ENCODE measurements at regions of chrX and their contacts with region 1.

Region 1: GRCh38 chrX:133792198-133792953 is 193.0 kb downstream of the GPC3 start:
- DNase-seq: peak; percentile 78
- H3K4me3 Mint-ChIP-seq: peak overlapping the region; percentile 58
- H3K27ac Mint-ChIP-seq: no peak overlapping the region
- H3K4me1 Mint-ChIP-seq: no peaks in the 10 kb centered on the region
- H3K27me3 Mint-ChIP-seq: no peaks in the 10 kb centered on the region
- CTCF ChIP-seq: peak; percentile 98

Region 2: DNA sequence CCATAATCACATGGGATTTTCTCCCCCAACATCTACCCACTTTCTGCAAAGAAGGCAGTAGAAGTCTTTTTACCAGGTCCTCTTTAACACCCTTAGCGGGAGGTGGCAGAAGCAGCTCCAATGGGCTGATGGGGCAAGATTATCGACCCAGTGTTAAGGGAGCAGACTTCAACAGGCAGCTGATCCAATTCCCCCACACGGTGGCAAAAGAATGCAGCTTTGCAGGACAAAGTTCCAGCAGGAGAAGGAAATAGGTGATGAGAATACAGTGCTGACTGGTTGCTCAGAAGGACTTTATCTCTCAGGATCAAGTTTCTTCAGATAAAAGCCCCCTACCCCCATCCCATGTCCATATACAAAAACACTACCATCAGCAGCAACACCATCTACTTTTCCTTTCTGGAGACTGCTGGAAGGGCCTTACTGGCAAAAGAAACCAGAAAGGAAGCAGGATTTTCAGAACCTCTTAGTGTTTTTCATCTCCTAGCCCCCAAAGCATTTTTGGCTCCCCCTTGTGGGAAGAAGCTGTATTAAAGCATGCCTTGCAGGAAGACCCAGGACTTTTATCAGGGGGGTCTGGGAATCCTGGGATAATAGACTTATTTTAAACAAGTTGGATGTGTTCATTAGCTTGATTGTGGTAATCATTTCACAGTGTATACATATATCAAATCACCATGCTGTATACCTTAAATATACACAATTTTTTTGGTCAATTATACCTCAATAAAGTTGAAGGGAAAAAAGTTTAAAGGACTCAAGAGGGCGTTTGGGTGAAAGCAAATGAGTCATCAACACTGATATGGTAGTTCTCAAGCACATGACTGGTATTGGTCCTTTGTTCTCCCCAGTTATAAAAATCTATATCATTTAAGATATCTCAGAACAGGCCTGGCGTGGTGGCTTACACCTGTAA is 46.6 kb after region 1 on chrX:
- CTCF ChIA-PET with region 1: interaction called, 21 read pairs
- intact Hi-C with region 1: loop called (anchors 1 kb)
- DNase-seq: peak; percentile 66
- H3K4me3 Mint-ChIP-seq: no peak overlapping the region
- H3K27ac Mint-ChIP-seq: no peak overlapping the region
- H3K4me1 Mint-ChIP-seq: peaks cover 10% of the 10 kb centered on the region
- H3K27me3 Mint-ChIP-seq: no peaks in the 10 kb centered on the region
- CTCF ChIP-seq: peak; percentile 46

Region 3: GRCh38 chrX:134020910-134021309 is 228.5 kb after region 1 on chrX:
- CTCF ChIA-PET with region 1: interaction called, 14 read pairs
- intact Hi-C with region 1: loop called (anchors 1 kb)
- DNase-seq: peak; percentile 11
- H3K4me3 Mint-ChIP-seq: no peak overlapping the region
- H3K27ac Mint-ChIP-seq: no peak overlapping the region
- H3K4me1 Mint-ChIP-seq: peaks cover under 1% of the 10 kb centered on the region
- H3K27me3 Mint-ChIP-seq: peaks cover 7% of the 10 kb centered on the region
- CTCF ChIP-seq: no peak

Region 4: DNA sequence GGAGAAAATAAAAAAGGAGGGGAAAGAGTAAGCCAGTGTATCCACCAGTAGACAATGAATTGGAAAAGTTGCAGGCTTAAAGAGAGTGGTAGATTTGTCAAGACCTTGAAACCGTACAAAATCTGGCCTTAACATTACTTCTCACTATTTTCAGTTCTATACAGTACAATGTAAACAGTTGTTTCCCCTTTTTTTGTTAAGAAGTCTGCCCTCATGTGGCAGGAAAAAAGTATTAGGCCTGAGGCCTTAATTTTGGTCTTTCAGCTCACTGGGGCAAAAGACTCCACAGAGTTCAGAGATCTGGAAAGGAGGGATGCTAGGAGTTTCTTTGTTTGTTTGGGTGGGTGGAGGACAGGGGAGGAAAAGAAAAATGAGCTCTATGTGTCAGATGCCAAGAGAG is 351.9 kb after region 1 on chrX:
- CTCF ChIA-PET with region 1: interaction called, 6 read pairs
- intact Hi-C with region 1: loop called (anchors 10 kb)
- DNase-seq: peak; percentile 3
- H3K4me3 Mint-ChIP-seq: no peak overlapping the region
- H3K27ac Mint-ChIP-seq: no peak overlapping the region
- H3K4me1 Mint-ChIP-seq: no peaks in the 10 kb centered on the region
- H3K27me3 Mint-ChIP-seq: peaks cover 14% of the 10 kb centered on the region
- CTCF ChIP-seq: no peak

Measured in Calu3 (cell line).